WTC11 (cell line): ENCODE measurements at regions of chr19 and their contacts with region 1.

Region 1: DNA sequence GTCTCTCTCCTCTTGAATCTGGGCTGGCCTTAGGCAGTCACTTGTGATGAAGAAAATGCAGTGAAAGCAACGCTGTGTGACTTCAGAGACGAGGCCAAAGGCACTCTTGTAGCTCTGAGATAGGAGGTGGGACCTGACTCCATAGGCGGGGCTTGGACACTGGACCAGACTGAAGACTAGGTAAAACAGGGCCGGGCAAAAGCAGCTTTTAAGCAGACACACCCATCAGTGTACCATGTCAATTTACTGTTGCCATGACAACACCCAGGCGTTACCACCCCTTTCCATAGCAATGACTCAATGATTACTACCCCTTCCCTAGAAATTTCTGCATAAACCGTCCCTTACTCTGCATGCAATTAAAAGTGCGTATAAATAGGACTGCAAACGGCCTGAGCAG is 6.6 kb upstream of the EID2 start:
- DNase-seq: no peak
- ATAC-seq: peak; percentile 44; the same call in 1 of the 2 replicates
- H3K4me3 Mint-ChIP-seq: no peak overlapping the region
- H3K27ac Mint-ChIP-seq: no peak overlapping the region
- H3K4me1 Mint-ChIP-seq: peaks cover 10% of the 10 kb centered on the region
- H3K27me3 Mint-ChIP-seq: peaks cover 3% of the 10 kb centered on the region; the same call in 1 of the 2 replicates
- CTCF ChIP-seq: no peak

Region 2: GRCh38 chr19:39599116-39599515 is 52.5 kb after region 1 on chr19:
- CTCF ChIA-PET with region 1: no interaction called
- POLR2A ChIA-PET with region 1: no interaction called
- DNase-seq: peak; percentile 67
- ATAC-seq: no peak
- H3K4me3 Mint-ChIP-seq: no peak overlapping the region
- H3K27ac Mint-ChIP-seq: no peak overlapping the region
- H3K4me1 Mint-ChIP-seq: no peaks in the 10 kb centered on the region
- H3K27me3 Mint-ChIP-seq: peaks cover 34% of the 10 kb centered on the region
- CTCF ChIP-seq: no peak

Region 3: GRCh38 chr19:39631178-39631577 is 84.6 kb after region 1 on chr19:
- CTCF ChIA-PET with region 1: interaction called, 12 read pairs
- POLR2A ChIA-PET with region 1: no interaction called
- DNase-seq: no peak
- ATAC-seq: no peak
- H3K4me3 Mint-ChIP-seq: no peak overlapping the region
- H3K27ac Mint-ChIP-seq: no peak overlapping the region
- H3K4me1 Mint-ChIP-seq: peaks cover 5% of the 10 kb centered on the region; the same call in 1 of the 2 replicates
- H3K27me3 Mint-ChIP-seq: peaks cover 34% of the 10 kb centered on the region
- CTCF ChIP-seq: no peak